PC-3 (cell line): ENCODE measurements at regions of chr11 and their contacts with region 1.

Region 1: DNA sequence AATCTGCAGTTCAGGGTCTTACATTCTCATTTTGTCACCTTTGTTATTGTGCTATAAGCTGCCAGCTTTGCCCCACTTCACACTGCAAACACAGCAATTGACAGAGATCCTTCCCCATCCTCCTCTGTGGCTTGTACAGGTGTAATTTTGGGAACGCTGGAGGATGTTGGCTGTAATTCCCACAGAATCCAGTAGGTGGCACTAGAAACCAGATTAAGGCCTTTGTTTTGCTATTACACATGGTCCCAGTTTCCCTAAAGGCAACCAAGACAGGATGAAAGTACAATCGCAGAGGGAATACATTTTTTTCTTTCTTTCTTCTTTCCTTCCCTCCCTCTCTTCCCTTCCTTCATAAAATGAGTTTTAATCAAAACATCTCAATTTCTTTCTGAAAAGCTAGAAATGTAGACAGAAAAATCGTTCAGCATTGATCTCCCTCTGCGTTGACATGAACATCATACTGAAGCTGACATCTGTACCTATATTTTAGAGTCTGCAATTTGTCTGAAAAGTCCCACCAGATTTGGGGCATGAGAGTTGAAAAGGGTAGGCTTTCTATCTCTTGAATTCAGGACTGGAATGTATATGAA is 21.3 kb upstream of the NELL1 start:
- DNase-seq: peak; percentile 71
- ATAC-seq: peak; percentile 70
- H3K4me3 ChIP-seq: no peak overlapping the region
- H3K27ac ChIP-seq: no peak overlapping the region
- H3K4me1 ChIP-seq: no peaks in the 10 kb centered on the region
- H3K27me3 ChIP-seq: 0 out of 2 replicates have a peak, but pooled peaks cover 11% of the 10 kb centered on the region
- CTCF ChIP-seq: peak; percentile 82

Region 2: DNA sequence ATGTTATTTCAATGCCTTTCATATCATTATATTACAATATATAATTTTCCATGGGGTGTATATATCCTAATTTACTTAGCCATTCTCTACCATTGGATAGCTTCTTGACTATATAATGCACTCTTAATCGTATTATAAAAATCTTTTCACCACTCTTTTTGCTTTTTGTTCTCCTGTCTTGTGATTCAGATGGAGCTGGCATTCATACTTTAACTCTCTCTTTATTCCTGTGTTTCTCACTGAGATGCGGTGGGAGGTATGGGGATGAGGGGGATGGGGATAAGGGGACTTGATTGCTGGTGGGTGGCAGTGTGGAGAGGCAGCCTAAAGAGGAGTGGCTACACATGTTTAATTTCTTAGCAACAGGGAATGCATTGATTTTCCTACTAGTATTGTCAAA is 127.3 kb after region 1 on chr11:
- CTCF ChIA-PET with region 1: no interaction called
- POLR2A ChIA-PET with region 1: no interaction called
- intact Hi-C with region 1: no loop called
- DNase-seq: no peak
- ATAC-seq: no peak
- H3K4me3 ChIP-seq: no peak overlapping the region
- H3K27ac ChIP-seq: no peak overlapping the region
- H3K4me1 ChIP-seq: no peaks in the 10 kb centered on the region
- H3K27me3 ChIP-seq: no peaks in the 10 kb centered on the region
- CTCF ChIP-seq: no peak

Region 3: DNA sequence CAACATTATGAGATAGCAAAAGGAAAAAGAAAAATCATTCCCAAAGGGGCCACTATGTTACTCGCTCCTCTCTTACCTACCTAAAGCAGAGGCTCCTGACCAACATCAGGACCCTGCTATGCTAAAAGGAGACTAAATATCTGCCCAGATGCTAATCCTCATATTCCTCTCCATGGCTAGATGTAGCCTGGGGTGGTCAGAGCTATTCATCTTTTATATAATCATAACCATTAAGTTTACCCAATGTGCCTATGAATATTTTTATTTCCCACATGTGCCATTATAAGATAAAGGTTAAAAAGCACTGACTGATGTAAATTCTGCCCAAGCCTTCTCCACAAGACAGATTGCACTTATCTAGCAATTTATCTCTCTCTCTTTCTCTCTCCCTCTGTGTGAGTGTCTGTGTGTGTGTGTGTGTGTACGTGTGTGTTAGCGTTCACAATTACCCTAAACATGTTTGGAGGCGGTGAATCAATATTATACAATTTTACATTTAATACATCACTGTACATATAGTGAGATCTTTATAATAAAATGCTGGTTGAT is 1503.7 kb after region 1 on chr11:
- CTCF ChIA-PET with region 1: no interaction called
- POLR2A ChIA-PET with region 1: no interaction called
- intact Hi-C with region 1: loop called (anchors 5 kb)
- DNase-seq: no peak
- ATAC-seq: no peak
- H3K4me3 ChIP-seq: no peak overlapping the region
- H3K27ac ChIP-seq: no peak overlapping the region
- H3K4me1 ChIP-seq: peaks cover 10% of the 10 kb centered on the region; the same call in 1 of the 2 replicates
- H3K27me3 ChIP-seq: no peaks in the 10 kb centered on the region
- CTCF ChIP-seq: no peak